ENCODE measurements at regions of chr3 and their contacts with region 1.

Region 1: DNA sequence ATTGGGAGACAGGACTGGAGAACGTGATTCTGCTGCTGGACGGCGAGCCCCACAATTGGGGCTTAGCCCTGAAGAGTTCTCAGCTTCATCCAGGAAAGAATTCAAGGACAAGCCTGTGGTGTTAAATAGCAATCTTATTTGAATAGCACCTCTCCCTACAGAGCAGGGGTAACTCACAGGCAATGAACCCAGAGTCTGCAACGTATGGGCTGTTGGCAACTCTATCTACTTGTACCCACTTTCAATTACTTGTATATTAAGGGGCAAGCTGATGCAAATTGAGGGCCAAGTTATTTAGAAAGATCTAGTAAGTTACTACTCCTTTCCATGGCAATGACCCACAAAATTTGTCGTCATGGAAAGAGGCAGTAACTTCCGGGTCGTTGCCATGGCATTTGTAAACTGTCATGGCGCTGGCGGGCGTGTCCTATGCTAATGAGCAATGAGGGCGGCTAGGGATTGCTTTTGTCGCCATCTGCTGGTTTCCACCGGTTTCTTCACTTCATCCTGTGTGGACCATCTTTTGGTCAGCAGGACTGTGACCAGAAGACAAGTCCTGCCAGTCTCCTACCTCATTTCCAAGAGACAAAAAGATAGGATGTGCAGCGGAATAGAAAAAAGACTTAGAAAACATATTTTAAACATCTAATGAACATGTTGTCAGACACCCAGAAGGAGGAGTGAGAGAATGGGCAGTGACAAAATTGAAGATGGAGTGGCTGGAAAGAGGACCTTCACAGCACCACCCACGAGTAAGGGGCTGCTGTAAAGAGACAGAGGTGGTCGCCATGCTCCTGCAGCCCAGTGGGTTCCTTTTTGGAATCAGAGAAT is 45.8 kb upstream of the SH3BP5 start:
- DNase-seq: peak; percentile 93
- H3K4me3 Mint-ChIP-seq: no peak overlapping the region
- H3K27ac Mint-ChIP-seq: peak overlapping the region; percentile 80
- H3K4me1 Mint-ChIP-seq: peaks cover 20% of the 10 kb centered on the region
- H3K27me3 Mint-ChIP-seq: peaks cover 5% of the 10 kb centered on the region

Region 2: DNA sequence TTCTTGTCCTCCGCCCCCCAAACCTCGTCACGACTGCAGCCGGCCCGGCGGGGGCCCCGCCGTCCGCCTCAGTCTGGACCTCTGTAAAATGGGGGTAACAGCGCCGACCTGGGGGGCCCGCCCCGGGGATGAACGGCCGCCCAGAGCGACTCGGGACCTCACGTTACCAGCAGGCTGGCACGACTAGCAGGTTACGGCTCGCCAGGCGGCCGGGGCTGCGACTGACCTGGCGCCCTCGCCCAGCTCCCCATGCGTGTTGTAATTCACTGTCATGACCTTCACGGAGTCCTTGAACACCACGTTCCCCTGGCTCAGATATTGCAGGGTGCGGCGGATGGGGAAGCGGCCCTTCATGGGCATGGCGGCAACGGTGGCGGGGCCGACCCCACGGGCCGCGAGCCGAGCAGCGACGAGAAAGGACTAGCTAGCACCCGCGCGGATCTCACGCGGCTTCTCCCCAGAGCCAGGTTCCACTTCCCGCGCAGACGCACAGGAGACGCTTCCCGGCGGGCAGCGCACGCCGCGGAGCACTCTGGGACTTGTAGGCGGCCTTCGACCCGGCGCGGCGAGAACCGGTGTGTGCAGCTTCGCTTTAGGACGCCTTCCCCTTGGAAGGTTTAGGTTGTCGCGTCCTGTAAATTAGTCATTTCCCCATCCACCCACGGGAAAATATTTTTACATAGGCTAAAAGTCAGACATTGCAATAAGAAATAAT is 313.2 kb before region 1 on chr3 and contains the start of gene MRPS25:
- intact Hi-C with region 1: loop called (anchors 1 kb)
- DNase-seq: peak; percentile 90
- H3K4me3 Mint-ChIP-seq: peak within 1 kb of the TSS; percentile 96
- H3K27ac Mint-ChIP-seq: peak within 1 kb of the TSS; percentile 95
- H3K4me1 Mint-ChIP-seq: peaks cover 20% of the 10 kb centered on the region
- H3K27me3 Mint-ChIP-seq: no peaks in the 10 kb centered on the region
- total RNA-seq, gene MRPS25: 96.5 and 105 TPM in 2 replicates

Region 3: DNA sequence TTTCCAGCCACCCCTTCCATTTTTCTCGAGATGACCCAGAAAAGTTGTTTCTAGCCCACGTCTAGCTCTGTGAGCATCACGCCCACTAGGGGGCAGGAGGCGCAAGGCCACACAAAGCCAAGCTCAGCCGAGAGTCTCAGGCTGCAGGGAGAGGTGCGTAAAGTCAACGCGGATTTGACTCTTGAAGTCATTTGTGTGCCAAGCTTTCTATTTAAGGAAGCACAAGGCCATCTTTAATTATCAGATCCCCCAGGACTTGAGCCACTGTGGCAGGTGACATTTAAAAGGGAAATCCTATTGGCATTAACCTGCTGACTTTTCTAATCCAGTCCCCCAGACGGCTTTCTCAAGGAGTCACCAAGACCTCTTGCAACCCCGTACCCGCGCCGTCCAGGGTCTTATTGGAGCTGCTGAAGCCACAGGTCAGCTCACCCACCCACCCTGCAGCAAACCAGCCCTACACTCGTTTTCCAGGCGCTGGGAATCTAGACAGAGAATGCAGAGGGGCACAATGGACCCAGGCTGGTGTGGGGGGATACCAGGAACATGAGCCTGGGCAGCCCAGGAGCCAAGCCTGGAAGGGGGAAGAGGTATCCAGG is 110.0 kb before region 1 on chr3:
- intact Hi-C with region 1: loop called (anchors 1 kb)
- DNase-seq: peak; percentile 74
- H3K4me3 Mint-ChIP-seq: no peak overlapping the region
- H3K27ac Mint-ChIP-seq: no peak overlapping the region
- H3K4me1 Mint-ChIP-seq: peaks cover 73% of the 10 kb centered on the region
- H3K27me3 Mint-ChIP-seq: no peaks in the 10 kb centered on the region

Region 4: DNA sequence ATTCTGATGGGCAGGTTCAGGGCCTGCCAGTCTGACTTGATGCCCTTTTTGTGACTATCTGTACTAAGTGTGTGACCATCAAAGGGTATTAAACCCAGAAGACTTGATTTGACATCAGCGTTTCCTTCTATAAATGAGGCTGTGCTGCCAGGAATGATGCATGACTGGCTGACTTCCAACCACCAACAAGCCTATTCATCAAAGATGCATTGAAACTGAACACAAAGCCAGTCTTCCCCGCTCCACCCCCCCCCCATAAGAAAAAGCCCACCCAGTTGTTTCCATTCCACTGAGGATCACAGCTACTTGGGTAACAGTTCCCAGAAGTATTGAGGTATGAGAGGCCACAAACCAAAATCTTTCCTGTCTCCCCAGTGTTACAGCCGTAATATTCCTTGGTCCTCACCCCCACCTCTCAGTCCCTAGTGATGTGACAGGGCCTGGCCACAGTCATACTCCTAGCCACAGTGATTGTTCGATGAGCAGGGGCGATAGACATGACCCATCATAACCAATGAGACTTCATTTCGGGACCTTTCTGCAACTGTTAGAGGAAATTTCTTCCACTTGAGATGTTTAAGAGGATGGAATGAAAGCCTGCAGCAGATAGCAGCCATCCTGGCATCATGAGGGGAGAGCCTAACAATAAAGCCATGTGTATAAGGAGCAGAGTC is 68.4 kb before region 1 on chr3:
- intact Hi-C with region 1: loop called (anchors 1 kb)
- DNase-seq: no peak
- H3K4me3 Mint-ChIP-seq: peak overlapping the region; percentile 66
- H3K27ac Mint-ChIP-seq: peak overlapping the region; percentile 94
- H3K4me1 Mint-ChIP-seq: peaks cover 66% of the 10 kb centered on the region
- H3K27me3 Mint-ChIP-seq: no peaks in the 10 kb centered on the region

Region 5: GRCh38 chr3:15356186-15356585 is 22.0 kb before region 1 on chr3:
- intact Hi-C with region 1: loop called (anchors 1 kb)
- DNase-seq: no peak
- H3K4me3 Mint-ChIP-seq: no peak overlapping the region
- H3K27ac Mint-ChIP-seq: peak overlapping the region; percentile 93
- H3K4me1 Mint-ChIP-seq: peaks cover 43% of the 10 kb centered on the region
- H3K27me3 Mint-ChIP-seq: no peaks in the 10 kb centered on the region

Region 6: DNA sequence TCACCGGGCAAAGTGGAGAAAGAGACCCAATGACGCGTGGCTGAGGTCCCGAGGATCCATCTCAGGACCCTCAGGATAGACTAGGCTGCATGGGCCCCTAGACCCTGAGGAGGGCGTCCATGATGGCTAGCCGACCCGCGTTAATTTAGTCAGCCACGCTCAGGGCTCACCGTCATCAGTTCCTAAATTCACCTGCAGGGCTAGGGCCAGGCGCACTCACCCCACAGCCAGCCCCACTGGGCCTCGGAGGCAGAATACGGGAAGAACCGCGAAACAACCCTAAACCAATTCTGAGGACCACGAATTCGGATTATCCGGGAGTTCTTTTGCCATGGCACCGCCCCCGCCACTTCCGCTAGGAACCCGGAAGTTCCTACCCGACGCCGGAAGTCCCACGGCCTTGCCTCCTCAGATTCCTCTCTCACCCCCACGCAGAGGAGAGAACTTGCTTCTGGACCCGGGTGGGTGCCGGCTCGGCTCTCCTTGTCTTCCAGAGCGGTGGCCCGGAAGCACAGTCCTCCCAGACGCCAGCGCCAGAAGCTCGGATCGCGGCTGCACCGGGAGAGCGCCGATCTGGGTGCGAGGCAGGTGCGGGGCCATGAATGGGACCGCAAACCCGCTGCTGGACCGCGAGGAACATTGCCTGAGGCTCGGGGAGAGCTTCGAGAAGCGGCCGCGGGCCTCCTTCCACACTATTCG is 49.2 kb after region 1 on chr3 and contains the starts of genes EAF1 and METTL6:
- intact Hi-C with region 1: loop called (anchors 1 kb)
- DNase-seq: peak; percentile 81
- H3K4me3 Mint-ChIP-seq: peak within 1 kb of the TSS; percentile 97
- H3K27ac Mint-ChIP-seq: peak within 1 kb of the TSS; percentile 96
- H3K4me1 Mint-ChIP-seq: peaks cover 61% of the 10 kb centered on the region
- H3K27me3 Mint-ChIP-seq: no peaks in the 10 kb centered on the region
- total RNA-seq, gene EAF1: 27.3 and 27.8 TPM in 2 replicates
- total RNA-seq, gene METTL6: 15.0 and 15.8 TPM in 2 replicates

Measured in activated T-helper 1 cell treated with anti-CD3 and anti-CD28 coated beads, Interleukin-12 subunit alpha, Interleukin-12 subunit beta, Interleukin-2, Interleukin-4 antibody, amounts not matched to agents 30 ng/mL and 10 ng/mL and 1 ng/mL, durations not matched to agents 14 hours and 24 hours and 36 hours (primary cell).